Posterior cingulate gyrus (tissue), 11 donors: ENCODE measurements at regions of chr12 and their contacts with region 1.

Region 1: GRCh38 chr12:6039894-6040568 is 84.4 kb downstream of the VWF start:
- DNase-seq: peak in 6 of 10 donors; percentile 42 to 93 (median 60)

Region 2: DNA sequence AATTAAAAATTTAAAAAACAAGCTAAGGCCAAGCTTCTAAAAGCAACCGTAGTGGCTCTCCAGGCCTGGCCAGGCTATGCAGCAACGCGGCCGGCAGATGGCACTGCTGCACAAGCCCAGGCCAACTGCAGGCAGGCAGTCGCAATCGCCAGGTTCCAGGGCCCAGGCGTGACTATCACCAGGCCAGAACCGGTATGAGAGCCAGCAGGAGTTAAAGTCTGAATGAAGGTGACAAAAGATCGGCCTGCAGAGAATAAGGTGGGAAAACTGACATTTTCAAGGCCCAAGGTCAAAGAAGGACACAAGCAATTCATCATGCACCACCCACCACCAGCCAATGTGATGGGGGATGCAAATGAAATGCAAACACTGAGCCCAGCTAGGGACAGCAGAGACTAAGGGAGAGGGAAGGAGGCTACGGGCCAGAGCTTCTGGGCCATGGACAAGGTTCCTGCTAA is 51.3 kb before region 1 on chr12:
- intact Hi-C with region 1: loop called (anchors 1 kb)
- DNase-seq: peak; percentile 65 to 97 (median 82)

Region 3: GRCh38 chr12:6867413-6868210 is 827.6 kb after region 1 on chr12 and contains the start of gene TPI1:
- intact Hi-C with region 1: no loop called
- DNase-seq: peak; percentile 75 to 98 (median 88)